K562 (cell line): ENCODE measurements at regions of chr7 and their contacts with region 1.

Region 1: GRCh38 chr7:143305423-143306070 is 10.4 kb upstream of the CLCN1 start:
- DNase-seq: peak; percentile 76 to 88 (median 78)
- ATAC-seq: peak; percentile 97
- H3K4me3 ChIP-seq: no peak overlapping the region
- H3K27ac ChIP-seq: no peak overlapping the region
- H3K4me1 ChIP-seq: no peaks in the 10 kb centered on the region
- H3K27me3 ChIP-seq: no peaks in the 10 kb centered on the region
- CTCF ChIP-seq: peak; percentile 96 to 98 (median 97)
- EP300 ChIP-seq: no peak
- POLR2A ChIP-seq: no peak; the same call in 1 of the 2 replicates
- RAD21 ChIP-seq: peak; percentile 73 to 84

Region 2: GRCh38 chr7:142866361-142867058 is 439.0 kb before region 1 on chr7:
- CTCF ChIA-PET with region 1: no interaction called
- POLR2A ChIA-PET with region 1: no interaction called
- in situ Hi-C with region 1: no loop called
- intact Hi-C with region 1: no loop called
- DNase-seq: peak; percentile 70 to 78 (median 75)
- ATAC-seq: peak; percentile 87
- H3K4me3 ChIP-seq: no peak overlapping the region
- H3K27ac ChIP-seq: no peak overlapping the region
- H3K4me1 ChIP-seq: peaks cover 0 to 30% of the 10 kb centered on the region in 2 experiments; a peak in 1 of 5 replicates
- H3K27me3 ChIP-seq: peaks cover 11 to 64% of the 10 kb centered on the region in 2 experiments; a peak in 4 of 5 replicates
- CTCF ChIP-seq: peak; percentile 82 to 88 (median 85)
- EP300 ChIP-seq: no peak
- POLR2A ChIP-seq: no peak
- RAD21 ChIP-seq: peak; percentile 70 to 72

Region 3: DNA sequence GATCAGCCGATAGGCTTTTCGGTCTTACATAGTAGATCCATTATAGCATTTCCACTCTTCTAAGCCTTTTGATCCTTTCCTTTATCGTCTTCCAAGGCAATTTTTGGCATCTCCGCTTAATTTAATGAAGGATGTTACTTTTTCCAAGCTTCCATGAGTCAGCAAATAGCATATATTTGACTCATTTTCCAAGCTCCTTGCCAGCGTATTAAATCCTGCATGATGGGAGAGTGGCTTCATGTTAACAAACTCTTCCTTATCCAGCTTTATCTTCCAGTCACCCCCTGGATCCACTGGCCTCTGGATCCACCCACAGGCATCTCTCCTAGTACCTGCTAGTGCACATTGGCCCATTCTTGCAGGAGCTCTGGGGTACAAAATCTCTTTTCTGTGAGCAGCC is 291.7 kb before region 1 on chr7:
- CTCF ChIA-PET with region 1: no interaction called
- POLR2A ChIA-PET with region 1: no interaction called
- in situ Hi-C with region 1: loop called (anchors 10 kb)
- intact Hi-C with region 1: no loop called
- DNase-seq: no peak
- ATAC-seq: no peak
- H3K4me3 ChIP-seq: no peak overlapping the region
- H3K27ac ChIP-seq: no peak overlapping the region
- H3K4me1 ChIP-seq: no peaks in the 10 kb centered on the region
- H3K27me3 ChIP-seq: peaks cover 12 to 18% of the 10 kb centered on the region in 2 experiments; a peak in 3 of 5 replicates
- CTCF ChIP-seq: no peak
- EP300 ChIP-seq: no peak
- POLR2A ChIP-seq: no peak
- RAD21 ChIP-seq: no peak

Region 4: DNA sequence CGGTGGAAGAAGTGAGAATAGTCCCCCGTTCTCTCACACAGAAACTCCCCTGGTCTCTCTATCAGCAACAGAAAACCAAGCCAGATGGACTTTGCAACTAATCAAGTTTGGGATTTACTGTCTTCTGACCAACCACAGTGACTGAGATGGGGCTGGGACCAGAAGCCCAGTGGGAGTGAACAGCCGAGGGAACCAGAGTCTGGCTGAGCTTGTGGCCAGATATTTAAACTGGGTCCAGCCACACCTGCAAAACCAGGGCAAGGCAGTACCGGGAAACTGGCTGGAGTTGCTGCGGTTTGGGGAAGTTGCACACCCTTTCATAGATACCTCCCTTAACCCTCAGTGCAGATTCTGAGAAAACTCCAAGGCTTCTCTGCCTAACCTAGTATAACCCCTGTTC is 36.3 kb before region 1 on chr7:
- CTCF ChIA-PET with region 1: no interaction called
- POLR2A ChIA-PET with region 1: no interaction called
- in situ Hi-C with region 1: no loop called
- intact Hi-C with region 1: loop called (anchors 2 kb)
- DNase-seq: peak in 2 of 4 experiments; percentile 6 to 30
- ATAC-seq: peak; percentile 43
- H3K4me3 ChIP-seq: no peak overlapping the region
- H3K27ac ChIP-seq: no peak overlapping the region
- H3K4me1 ChIP-seq: peaks cover 15 to 18% of the 10 kb centered on the region in 2 experiments
- H3K27me3 ChIP-seq: no peaks in the 10 kb centered on the region
- CTCF ChIP-seq: no peak
- EP300 ChIP-seq: no peak
- POLR2A ChIP-seq: no peak
- RAD21 ChIP-seq: no peak